ENCODE measurements at regions of chr3 and their contacts with region 1.

Region 1: DNA sequence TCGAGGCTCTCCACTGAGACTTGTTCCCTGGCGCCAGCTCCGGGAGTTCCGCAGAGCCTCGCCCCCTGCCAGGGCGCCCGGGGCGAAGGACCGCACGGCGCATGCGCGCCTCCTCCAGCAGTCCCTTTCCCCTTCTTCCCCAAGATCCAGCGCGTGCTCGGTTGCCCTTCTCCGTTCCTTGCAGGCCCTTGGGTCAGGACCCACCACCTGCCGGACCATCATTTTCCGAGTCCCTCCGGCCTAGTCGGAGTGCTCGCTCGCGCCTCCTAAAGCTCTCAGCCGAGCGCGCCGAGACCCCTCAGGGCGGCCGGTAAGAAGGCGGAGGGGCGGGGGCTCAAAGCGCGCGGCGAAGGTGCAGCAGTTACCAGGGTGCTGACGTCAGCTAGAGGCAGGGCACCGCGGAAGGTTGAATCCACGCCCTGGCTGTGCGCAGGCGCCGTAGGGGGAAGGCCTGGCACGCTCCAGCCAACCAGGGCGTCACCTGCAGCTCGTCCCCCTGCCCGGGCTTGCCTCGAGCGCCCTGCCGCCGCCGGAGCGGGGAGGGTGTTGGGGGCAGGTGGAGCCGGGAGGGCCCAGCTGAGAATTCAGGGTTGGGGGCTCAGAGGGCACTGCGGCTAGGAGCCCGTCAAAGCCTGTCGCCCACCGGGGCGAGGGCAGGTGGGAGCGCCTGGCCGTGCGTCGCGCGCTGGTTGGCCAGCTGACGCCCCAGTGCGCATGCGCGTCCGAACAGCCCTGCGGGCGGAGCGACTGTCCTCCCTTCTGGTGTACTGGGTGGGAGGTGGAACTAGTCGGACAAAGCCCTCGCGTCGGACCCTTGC is at the start of gene TCAIM:
- DNase-seq: peak; percentile 99
- total RNA-seq, gene TCAIM: 36.5 TPM

Region 2: DNA sequence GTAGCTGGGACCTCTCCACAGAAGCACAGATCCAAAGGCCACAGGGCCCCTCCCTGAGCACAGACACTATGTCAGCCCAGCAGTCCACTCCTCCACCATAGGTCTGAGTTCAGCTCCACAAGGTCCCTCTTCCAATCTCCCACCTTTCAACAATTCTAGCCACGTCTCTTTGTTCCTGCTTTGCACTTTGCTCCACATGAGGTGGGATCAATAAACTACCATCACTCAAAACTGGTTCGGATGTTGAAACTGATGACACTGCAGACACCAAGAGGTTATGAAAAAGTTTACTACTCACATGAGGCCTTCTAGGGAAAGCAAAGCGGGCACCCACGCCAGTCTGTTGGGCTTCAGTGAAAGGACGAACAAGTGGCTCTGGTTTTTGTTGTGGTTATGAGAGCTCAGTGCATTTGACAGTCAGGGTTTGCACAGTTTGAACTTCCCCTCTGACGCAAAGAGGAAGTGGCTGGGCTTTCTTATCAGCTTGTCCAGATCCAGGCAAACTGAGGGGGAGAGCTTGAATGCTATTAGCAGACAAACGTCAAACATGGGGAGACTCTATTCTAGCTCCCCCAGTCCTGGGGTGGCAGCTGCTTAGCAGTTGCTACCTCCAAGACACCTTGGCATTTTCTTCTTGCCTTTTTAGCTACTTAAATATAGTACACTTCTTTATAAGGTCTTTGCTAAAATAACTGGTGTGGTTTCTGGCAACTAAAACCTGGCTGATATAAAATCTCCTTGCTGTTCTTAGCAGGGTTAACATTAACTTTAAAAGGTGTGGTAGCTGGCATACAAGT is 101.5 kb after region 1 on chr3:
- intact Hi-C with region 1: loop called (anchors 2 kb)
- DNase-seq: peak; percentile 89